PC-9 (cell line): ENCODE measurements at regions of chr1 and their contacts with region 1.

Region 1: GRCh38 chr1:150925816-150926741 is at the start of gene SETDB1:
- DNase-seq: peak; percentile 91 to 95
- H3K4me3 ChIP-seq: peak within 1 kb of the TSS; percentile 67
- H3K27ac ChIP-seq: peak within 1 kb of the TSS; percentile 79
- H3K4me1 ChIP-seq: peaks cover 14% of the 10 kb centered on the region
- H3K27me3 ChIP-seq: no peaks in the 10 kb centered on the region
- CTCF ChIP-seq: no peak
- total RNA-seq, gene SETDB1: 45.6 and 51.1 TPM in 2 replicates

Region 2: GRCh38 chr1:150604226-150604588 is 321.9 kb before region 1 on chr1:
- CTCF ChIA-PET with region 1: interaction called, 13 read pairs
- POLR2A ChIA-PET with region 1: no interaction called
- intact Hi-C with region 1: no loop called
- DNase-seq: no peak
- H3K4me3 ChIP-seq: no peak overlapping the region; the same call in 1 of the 2 replicates
- H3K27ac ChIP-seq: peak overlapping the region; percentile 88
- H3K4me1 ChIP-seq: peaks cover 30% of the 10 kb centered on the region
- H3K27me3 ChIP-seq: no peaks in the 10 kb centered on the region
- CTCF ChIP-seq: no peak

Region 3: GRCh38 chr1:150642296-150642695 is 283.8 kb before region 1 on chr1:
- CTCF ChIA-PET with region 1: interaction called, 11 read pairs
- POLR2A ChIA-PET with region 1: no interaction called
- intact Hi-C with region 1: no loop called
- DNase-seq: no peak
- H3K4me3 ChIP-seq: no peak overlapping the region
- H3K27ac ChIP-seq: no peak overlapping the region
- H3K4me1 ChIP-seq: no peaks in the 10 kb centered on the region
- H3K27me3 ChIP-seq: no peaks in the 10 kb centered on the region
- CTCF ChIP-seq: no peak

Region 4: DNA sequence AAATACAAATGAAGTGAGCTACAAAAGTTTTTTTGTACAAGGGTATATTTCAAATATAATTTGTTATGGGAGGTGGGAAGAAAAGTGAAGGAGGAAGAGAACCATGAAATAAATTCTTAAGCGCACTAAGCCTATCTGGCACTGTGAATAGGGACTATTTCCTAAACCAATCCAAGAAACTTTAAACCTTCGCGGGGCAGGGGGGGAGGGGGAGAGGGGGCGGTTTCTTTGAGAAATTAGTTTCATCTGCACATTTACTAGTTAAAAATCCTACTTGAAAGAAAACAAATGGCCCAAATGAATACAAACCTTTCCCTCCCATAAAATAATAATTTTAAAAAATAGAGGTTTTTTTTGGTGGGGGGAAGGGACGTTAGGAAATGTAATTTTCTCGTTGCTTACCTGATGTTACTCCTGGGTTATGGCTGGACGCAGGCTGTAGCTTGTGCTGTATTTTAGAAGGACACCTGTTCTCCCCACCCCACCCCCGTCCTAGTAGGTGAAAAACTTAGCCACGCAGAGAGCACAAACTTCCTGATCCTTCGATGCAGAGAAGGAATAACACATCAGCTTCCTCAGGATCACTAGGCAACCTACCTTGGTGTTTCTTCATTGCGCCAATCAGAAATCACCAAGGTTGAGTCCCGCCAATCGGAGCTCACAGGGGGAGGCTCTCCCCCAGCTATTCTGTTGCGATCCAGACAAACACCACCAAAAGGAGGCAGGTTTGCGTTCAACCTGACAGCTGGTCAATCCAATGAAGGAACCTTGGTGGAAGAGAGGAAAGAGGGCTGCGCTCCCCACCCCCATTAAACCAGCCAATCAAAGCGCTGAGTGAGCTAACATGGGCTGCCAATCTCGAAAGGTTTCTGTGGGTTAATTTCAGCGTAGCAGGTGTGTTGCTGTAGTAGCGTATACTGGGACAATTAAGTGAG is 229.2 kb before region 1 on chr1 and contains the start of gene GOLPH3L:
- CTCF ChIA-PET with region 1: no interaction called
- POLR2A ChIA-PET with region 1: interaction called, 13 read pairs
- intact Hi-C with region 1: no loop called
- DNase-seq: peak; percentile 95 to 99
- H3K4me3 ChIP-seq: peak within 1 kb of the TSS; percentile 83
- H3K27ac ChIP-seq: peak within 1 kb of the TSS; percentile 40
- H3K4me1 ChIP-seq: peaks cover 10% of the 10 kb centered on the region
- H3K27me3 ChIP-seq: no peaks in the 10 kb centered on the region
- CTCF ChIP-seq: no peak
- total RNA-seq, gene GOLPH3L: 36.5 and 52.7 TPM in 2 replicates

Region 5: DNA sequence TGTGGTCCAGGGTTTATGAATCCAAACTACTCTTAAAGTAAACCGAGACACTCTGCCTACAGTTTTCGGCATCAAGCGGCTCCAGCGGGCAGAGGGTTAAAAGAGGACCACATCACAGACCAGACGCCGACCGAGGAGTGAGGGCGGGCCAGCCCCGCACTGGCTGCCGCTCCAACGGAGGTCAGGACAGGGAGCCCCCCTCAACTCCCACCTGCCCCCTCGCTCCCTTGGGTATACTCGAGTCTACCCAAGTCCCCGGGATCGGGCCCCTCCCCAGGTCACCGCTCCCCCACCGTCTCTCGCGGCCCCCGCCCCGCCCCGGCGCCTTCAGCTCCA is 50.0 kb before region 1 on chr1:
- CTCF ChIA-PET with region 1: no interaction called
- POLR2A ChIA-PET with region 1: no interaction called
- intact Hi-C with region 1: loop called (anchors 1 kb)
- DNase-seq: peak; percentile 37 to 54
- H3K4me3 ChIP-seq: peak overlapping the region; percentile 97
- H3K27ac ChIP-seq: peak overlapping the region; percentile 35; the same call in 1 of the 2 replicates
- H3K4me1 ChIP-seq: peaks cover 24% of the 10 kb centered on the region
- H3K27me3 ChIP-seq: no peaks in the 10 kb centered on the region
- CTCF ChIP-seq: no peak